Ovary (tissue), 10 donors: ENCODE measurements at regions of chr7 and their contacts with region 1.

Region 1: GRCh38 chr7:150340024-150340749 is 1.2 kb downstream of the RARRES2 start:
- DNase-seq: peak; percentile 56 to 75 (median 67)
- H3K4me3 ChIP-seq: peak overlapping the region; percentile 84
- H3K27ac ChIP-seq: peak overlapping the region; percentile 95
- H3K4me1 ChIP-seq: peaks cover 24% of the 10 kb centered on the region
- H3K27me3 ChIP-seq: no peaks in the 10 kb centered on the region
- CTCF ChIP-seq: no peak
- EP300 ChIP-seq: no peak
- POLR2A ChIP-seq: no peak

Region 2: GRCh38 chr7:150379441-150380245 is 39.5 kb after region 1 on chr7:
- intact Hi-C with region 1: loop called in 1 of 4 experiments (anchors 5 kb)
- DNase-seq: peak in 3 of 5 donors; percentile 56 to 70 (median 65)
- H3K4me3 ChIP-seq: peak overlapping the region; percentile 60
- H3K27ac ChIP-seq: peak overlapping the region; percentile 75 to 78
- H3K4me1 ChIP-seq: peaks cover 4% of the 10 kb centered on the region
- H3K27me3 ChIP-seq: no peaks in the 10 kb centered on the region
- CTCF ChIP-seq: no peak
- EP300 ChIP-seq: no peak
- POLR2A ChIP-seq: no peak

Region 3: DNA sequence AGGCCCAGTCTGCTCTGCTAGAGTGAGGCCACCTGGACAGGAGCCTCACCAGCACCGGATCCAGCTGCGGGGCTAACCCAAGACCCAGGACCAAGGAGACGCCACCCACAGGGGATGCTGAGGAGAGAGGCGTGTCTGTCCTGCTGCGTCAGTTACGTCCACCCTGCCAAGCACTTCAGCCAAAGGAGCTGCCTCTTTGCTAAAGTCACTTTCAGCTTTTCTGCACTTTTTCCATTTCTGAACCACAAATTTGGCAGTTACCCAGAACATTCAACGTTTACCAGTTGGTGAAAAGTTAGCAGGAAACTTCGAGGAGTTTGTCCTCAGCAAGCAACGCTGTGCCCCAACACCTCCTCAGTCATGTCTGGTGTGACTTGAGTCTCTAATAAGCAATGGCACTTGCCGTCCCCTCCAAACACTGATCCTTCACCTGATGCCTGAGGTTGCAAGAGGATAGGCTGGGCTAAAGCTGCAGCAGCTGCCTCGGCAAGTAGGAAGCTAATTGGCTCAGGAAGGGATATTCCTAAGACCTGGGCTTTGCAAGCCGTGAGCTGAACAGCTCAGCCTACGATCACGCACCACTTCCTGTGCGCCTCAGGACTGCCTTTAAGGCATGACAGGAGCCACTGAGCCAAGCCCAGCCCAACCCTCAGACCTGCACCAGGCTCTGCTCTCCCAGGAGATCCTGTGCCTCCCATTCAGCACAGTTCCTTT is 597.8 kb after region 1 on chr7:
- intact Hi-C with region 1: no loop called
- DNase-seq: peak in 1 of 5 donors; percentile 28
- H3K4me3 ChIP-seq: no peak overlapping the region
- H3K27ac ChIP-seq: no peak overlapping the region
- H3K4me1 ChIP-seq: no peaks in the 10 kb centered on the region
- H3K27me3 ChIP-seq: no peaks in the 10 kb centered on the region
- CTCF ChIP-seq: no peak
- EP300 ChIP-seq: no peak
- POLR2A ChIP-seq: no peak